Activated CD8-positive, alpha-beta T cell treated with anti-CD3 and anti-CD28 coated beads for 36 hours (primary cell): ENCODE measurements at regions of chr6 and their contacts with region 1.

Region 1: GRCh38 chr6:111259089-111259831 is 172.0 kb downstream of the SLC16A10 start:
- DNase-seq: peak; percentile 99
- ATAC-seq: peak; percentile 97
- H3K4me3 Mint-ChIP-seq: peak overlapping the region; percentile 81
- H3K27ac Mint-ChIP-seq: peak overlapping the region; percentile 78
- H3K4me1 Mint-ChIP-seq: peaks cover 32% of the 10 kb centered on the region
- H3K27me3 Mint-ChIP-seq: no peaks in the 10 kb centered on the region
- CTCF ChIP-seq: peak; percentile 90

Region 2: DNA sequence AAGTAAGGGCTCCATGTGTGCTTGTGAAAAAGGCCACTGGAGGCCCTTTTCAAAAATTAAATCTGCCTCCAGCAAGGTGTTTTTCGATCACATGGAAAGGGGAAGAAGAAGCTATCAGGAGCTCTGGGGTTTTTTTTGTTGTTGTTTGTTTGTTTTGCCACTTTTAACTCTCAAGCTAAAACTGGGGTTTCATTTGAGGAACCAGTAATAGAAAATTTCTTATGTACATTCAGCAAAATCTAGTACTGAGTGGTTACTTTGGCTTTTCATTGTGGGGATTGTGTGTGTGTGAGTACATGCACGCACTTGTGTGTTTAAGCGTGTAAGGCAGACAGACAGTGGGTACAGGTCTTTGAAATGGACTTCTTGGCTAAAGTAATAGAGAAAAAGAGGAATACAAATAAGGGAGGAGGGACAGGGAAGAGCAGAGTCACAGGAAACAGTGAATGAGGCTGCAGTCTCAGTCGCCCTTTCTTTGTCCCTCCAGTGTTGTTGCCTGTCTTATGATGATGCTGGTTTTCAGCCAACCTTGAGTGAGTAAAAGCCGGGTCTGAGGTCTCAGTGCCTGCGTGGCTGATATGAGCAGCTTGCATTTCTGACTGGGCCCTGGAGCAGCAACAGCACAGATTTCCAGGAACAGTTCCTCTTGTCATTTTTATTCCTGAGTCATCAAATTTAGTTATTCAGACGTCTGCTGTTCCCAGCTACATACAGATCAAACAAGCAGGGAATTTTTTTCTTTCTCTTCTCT is 145.7 kb before region 1 on chr6:
- CTCF ChIA-PET with region 1: no interaction called
- POLR2A ChIA-PET with region 1: no interaction called
- intact Hi-C with region 1: no loop called
- DNase-seq: peak; percentile 74
- ATAC-seq: peak; percentile 90
- H3K4me3 Mint-ChIP-seq: peak overlapping the region; percentile 53
- H3K27ac Mint-ChIP-seq: peak overlapping the region; percentile 94
- H3K4me1 Mint-ChIP-seq: peaks cover 43% of the 10 kb centered on the region
- H3K27me3 Mint-ChIP-seq: no peaks in the 10 kb centered on the region
- CTCF ChIP-seq: no peak

Region 3: GRCh38 chr6:111220383-111221031 is 38.8 kb before region 1 on chr6:
- CTCF ChIA-PET with region 1: interaction called, 12 read pairs
- POLR2A ChIA-PET with region 1: no interaction called
- intact Hi-C with region 1: no loop called
- DNase-seq: no peak
- ATAC-seq: no peak
- H3K4me3 Mint-ChIP-seq: no peak overlapping the region
- H3K27ac Mint-ChIP-seq: no peak overlapping the region
- H3K4me1 Mint-ChIP-seq: peaks cover 9% of the 10 kb centered on the region
- H3K27me3 Mint-ChIP-seq: no peaks in the 10 kb centered on the region
- CTCF ChIP-seq: no peak

Region 4: DNA sequence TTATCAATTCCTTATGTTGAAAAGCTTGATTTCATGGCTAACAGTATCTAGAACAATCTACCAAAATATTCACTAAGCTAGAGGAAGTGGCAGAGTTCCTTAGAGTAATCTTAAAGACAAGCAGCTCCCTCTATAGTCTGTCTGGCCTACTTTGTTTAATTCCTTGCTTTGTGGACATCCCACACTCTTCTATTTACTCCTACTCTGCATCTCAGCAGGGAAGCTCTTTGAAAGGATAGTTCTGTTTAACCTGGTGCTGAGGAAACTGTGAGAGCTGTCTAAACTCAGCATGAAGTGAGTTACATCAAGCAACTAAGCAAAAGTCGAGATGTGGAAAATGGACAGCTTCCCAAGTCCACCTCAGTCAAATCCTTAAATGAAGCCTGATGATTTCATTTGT is 219.5 kb after region 1 on chr6:
- CTCF ChIA-PET with region 1: interaction called, 43 read pairs
- POLR2A ChIA-PET with region 1: interaction called, 15 read pairs
- intact Hi-C with region 1: loop called (anchors 2 kb)
- DNase-seq: no peak
- ATAC-seq: no peak
- H3K4me3 Mint-ChIP-seq: no peak overlapping the region
- H3K27ac Mint-ChIP-seq: no peak overlapping the region
- H3K4me1 Mint-ChIP-seq: peaks cover 36% of the 10 kb centered on the region
- H3K27me3 Mint-ChIP-seq: no peaks in the 10 kb centered on the region
- CTCF ChIP-seq: peak; percentile 48

Region 5: GRCh38 chr6:111483736-111484632 is 224.7 kb after region 1 on chr6:
- CTCF ChIA-PET with region 1: interaction called, 43 read pairs
- POLR2A ChIA-PET with region 1: interaction called, 15 read pairs
- intact Hi-C with region 1: loop called (anchors 2 kb)
- DNase-seq: peak; percentile 88
- ATAC-seq: peak; percentile 59
- H3K4me3 Mint-ChIP-seq: peak overlapping the region; percentile 90
- H3K27ac Mint-ChIP-seq: peak overlapping the region; percentile 98
- H3K4me1 Mint-ChIP-seq: peaks cover 44% of the 10 kb centered on the region
- H3K27me3 Mint-ChIP-seq: no peaks in the 10 kb centered on the region
- CTCF ChIP-seq: no peak

Region 6: DNA sequence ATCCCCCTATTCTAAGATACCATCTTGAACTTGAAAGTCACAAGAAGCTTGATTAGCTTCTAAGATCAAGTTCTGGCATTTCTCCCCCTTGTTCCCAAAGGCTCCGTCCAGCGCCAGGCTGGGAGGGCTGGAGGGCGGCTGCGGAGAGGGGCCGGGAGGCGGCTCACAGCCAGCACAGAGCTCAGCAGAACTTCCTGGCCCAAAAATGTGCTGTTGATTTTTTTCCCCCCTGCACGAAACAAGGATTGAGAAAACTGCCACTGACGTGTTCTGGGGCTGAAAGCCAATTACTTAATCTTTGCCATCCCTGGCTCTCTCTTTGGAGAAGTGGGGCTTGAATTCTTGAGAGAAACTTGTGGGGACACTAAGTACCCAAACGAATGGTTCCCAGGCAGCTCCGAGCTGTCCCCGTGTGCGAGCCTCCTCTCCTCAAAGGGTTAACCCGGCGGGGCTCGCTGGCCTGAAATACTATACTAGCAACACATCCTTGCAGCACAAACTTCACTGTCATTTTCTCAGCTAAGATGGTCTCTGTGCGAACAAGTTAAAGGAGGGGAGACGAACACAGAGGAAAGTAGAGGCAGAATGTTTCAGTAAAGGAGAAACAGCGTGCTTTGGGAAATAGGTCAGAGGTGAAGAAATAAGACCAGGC is 346.0 kb after region 1 on chr6:
- CTCF ChIA-PET with region 1: interaction called, 16 read pairs
- POLR2A ChIA-PET with region 1: interaction called, 5 read pairs
- intact Hi-C with region 1: no loop called
- DNase-seq: peak; percentile 48
- ATAC-seq: peak; percentile 46
- H3K4me3 Mint-ChIP-seq: peak overlapping the region; percentile 97
- H3K27ac Mint-ChIP-seq: peak overlapping the region; percentile 96
- H3K4me1 Mint-ChIP-seq: peaks cover 39% of the 10 kb centered on the region
- H3K27me3 Mint-ChIP-seq: no peaks in the 10 kb centered on the region
- CTCF ChIP-seq: no peak

Region 7: GRCh38 chr6:111642463-111643158 is 383.4 kb after region 1 on chr6:
- CTCF ChIA-PET with region 1: interaction called, 10 read pairs
- POLR2A ChIA-PET with region 1: no interaction called
- intact Hi-C with region 1: no loop called
- DNase-seq: peak; percentile 59
- ATAC-seq: peak; percentile 72
- H3K4me3 Mint-ChIP-seq: no peak overlapping the region
- H3K27ac Mint-ChIP-seq: no peak overlapping the region
- H3K4me1 Mint-ChIP-seq: no peaks in the 10 kb centered on the region
- H3K27me3 Mint-ChIP-seq: no peaks in the 10 kb centered on the region
- CTCF ChIP-seq: peak; percentile 37

Region 8: DNA sequence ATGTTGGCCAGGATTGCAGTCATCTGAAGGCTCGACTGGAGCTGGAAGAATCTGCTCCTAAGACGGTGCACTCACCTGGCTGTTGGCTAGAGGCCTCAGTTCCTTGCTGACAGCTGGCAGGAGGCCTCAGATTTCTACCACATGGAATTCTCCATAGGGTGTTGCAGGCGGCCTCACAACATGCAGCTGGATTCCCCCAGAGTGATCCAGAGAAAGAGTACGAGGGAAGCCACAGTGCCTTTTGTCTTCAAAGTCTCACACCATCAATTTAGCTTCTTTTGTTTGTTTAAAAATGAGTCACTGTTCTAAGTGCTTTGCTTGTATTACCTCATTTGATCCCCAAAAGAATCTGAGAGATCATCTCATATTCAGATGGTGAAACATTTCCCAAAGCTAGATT is 679.5 kb after region 1 on chr6:
- CTCF ChIA-PET with region 1: no interaction called
- POLR2A ChIA-PET with region 1: no interaction called
- intact Hi-C with region 1: no loop called
- DNase-seq: no peak
- ATAC-seq: no peak
- H3K4me3 Mint-ChIP-seq: no peak overlapping the region
- H3K27ac Mint-ChIP-seq: no peak overlapping the region
- H3K4me1 Mint-ChIP-seq: no peaks in the 10 kb centered on the region
- H3K27me3 Mint-ChIP-seq: no peaks in the 10 kb centered on the region
- CTCF ChIP-seq: no peak